ENCODE measurements at regions of chr4 and their contacts with region 1.

Region 1: GRCh38 chr4:27010334-27010940 is 149.8 kb downstream of the STIM2 start:
- DNase-seq: peak; percentile 47 to 79
- ATAC-seq: peak; percentile 76 to 92 (median 88)
- H3K4me3 ChIP-seq: no peak overlapping the region
- H3K4me3 Mint-ChIP-seq: no peak overlapping the region
- H3K27ac ChIP-seq: no peak overlapping the region
- H3K27ac Mint-ChIP-seq: peak overlapping the region; percentile 27 to 43
- H3K4me1 ChIP-seq: peaks cover 2% of the 10 kb centered on the region
- H3K4me1 Mint-ChIP-seq: peaks cover 16 to 18% of the 10 kb centered on the region in 2 donors
- H3K27me3 ChIP-seq: no peaks in the 10 kb centered on the region
- H3K27me3 Mint-ChIP-seq: no peaks in the 10 kb centered on the region
- CTCF ChIP-seq: peak; percentile 98

Region 2: GRCh38 chr4:26459054-26459755 is 551.2 kb before region 1 on chr4:
- intact Hi-C with region 1: loop called (anchors 1 kb)
- DNase-seq: peak in 1 of 2 donors; percentile 62
- ATAC-seq: peak in 2 of 3 donors; percentile 58 to 63
- H3K4me3 ChIP-seq: no peak overlapping the region
- H3K4me3 Mint-ChIP-seq: no peak overlapping the region
- H3K27ac ChIP-seq: no peak overlapping the region
- H3K27ac Mint-ChIP-seq: no peak overlapping the region
- H3K4me1 ChIP-seq: peaks cover 5% of the 10 kb centered on the region
- H3K4me1 Mint-ChIP-seq: peaks cover 5 to 6% of the 10 kb centered on the region in 2 donors
- H3K27me3 ChIP-seq: no peaks in the 10 kb centered on the region
- H3K27me3 Mint-ChIP-seq: peaks cover 0 to 4% of the 10 kb centered on the region in 2 donors
- CTCF ChIP-seq: peak; percentile 53

Region 3: GRCh38 chr4:26670903-26671537 is 339.4 kb before region 1 on chr4:
- intact Hi-C with region 1: no loop called
- DNase-seq: no peak
- ATAC-seq: no peak
- H3K4me3 ChIP-seq: no peak overlapping the region
- H3K4me3 Mint-ChIP-seq: no peak overlapping the region
- H3K27ac ChIP-seq: no peak overlapping the region
- H3K27ac Mint-ChIP-seq: no peak overlapping the region
- H3K4me1 ChIP-seq: no peaks in the 10 kb centered on the region
- H3K4me1 Mint-ChIP-seq: peaks cover 0 to 7% of the 10 kb centered on the region in 2 donors
- H3K27me3 ChIP-seq: no peaks in the 10 kb centered on the region
- H3K27me3 Mint-ChIP-seq: no peaks in the 10 kb centered on the region
- CTCF ChIP-seq: no peak

Region 4: GRCh38 chr4:26787461-26788340 is 222.7 kb before region 1 on chr4:
- intact Hi-C with region 1: loop called (anchors 1 kb)
- DNase-seq: peak in 1 of 2 donors; percentile 54
- ATAC-seq: peak; percentile 41 to 70 (median 60)
- H3K4me3 ChIP-seq: no peak overlapping the region
- H3K4me3 Mint-ChIP-seq: no peak overlapping the region
- H3K27ac ChIP-seq: no peak overlapping the region
- H3K27ac Mint-ChIP-seq: peak overlapping the region in 1 of 2 donors; percentile 71
- H3K4me1 ChIP-seq: peaks cover 7% of the 10 kb centered on the region
- H3K4me1 Mint-ChIP-seq: peaks cover 12 to 22% of the 10 kb centered on the region in 2 donors
- H3K27me3 ChIP-seq: no peaks in the 10 kb centered on the region
- H3K27me3 Mint-ChIP-seq: no peaks in the 10 kb centered on the region
- CTCF ChIP-seq: peak; percentile 28